ENCODE measurements at regions of chr22 and their contacts with region 1.

Region 1: GRCh38 chr22:30116362-30117117 is 36.3 kb downstream of the HORMAD2 start:
- DNase-seq: no peak
- ATAC-seq: no peak
- H3K4me3 Mint-ChIP-seq: no peak overlapping the region
- H3K27ac Mint-ChIP-seq: no peak overlapping the region
- H3K4me1 Mint-ChIP-seq: peaks cover 41% of the 10 kb centered on the region
- H3K27me3 Mint-ChIP-seq: no peaks in the 10 kb centered on the region

Region 2: GRCh38 chr22:30062950-30063349 is 53.6 kb before region 1 on chr22:
- CTCF ChIA-PET with region 1: no interaction called
- POLR2A ChIA-PET with region 1: no interaction called
- DNase-seq: no peak
- ATAC-seq: no peak
- H3K4me3 Mint-ChIP-seq: no peak overlapping the region
- H3K27ac Mint-ChIP-seq: no peak overlapping the region
- H3K4me1 Mint-ChIP-seq: no peaks in the 10 kb centered on the region
- H3K27me3 Mint-ChIP-seq: peaks cover 21% of the 10 kb centered on the region

Region 3: GRCh38 chr22:30178181-30179126 is 61.9 kb after region 1 on chr22:
- CTCF ChIA-PET with region 1: interaction called, 17 read pairs
- POLR2A ChIA-PET with region 1: no interaction called
- DNase-seq: peak; percentile 74
- ATAC-seq: peak; percentile 82
- H3K4me3 Mint-ChIP-seq: peak overlapping the region; percentile 35
- H3K27ac Mint-ChIP-seq: peak overlapping the region; percentile 93
- H3K4me1 Mint-ChIP-seq: peaks cover 88% of the 10 kb centered on the region
- H3K27me3 Mint-ChIP-seq: no peaks in the 10 kb centered on the region

Region 4: GRCh38 chr22:30253205-30253852 is 136.8 kb after region 1 on chr22:
- CTCF ChIA-PET with region 1: interaction called, 14 read pairs
- POLR2A ChIA-PET with region 1: interaction called, 3 read pairs
- DNase-seq: no peak
- ATAC-seq: no peak
- H3K4me3 Mint-ChIP-seq: peak overlapping the region; percentile 12
- H3K27ac Mint-ChIP-seq: peak overlapping the region; percentile 76
- H3K4me1 Mint-ChIP-seq: peaks cover 93% of the 10 kb centered on the region
- H3K27me3 Mint-ChIP-seq: no peaks in the 10 kb centered on the region

Measured in activated CD8-positive, alpha-beta T cell treated with anti-CD3 and anti-CD28 coated beads, Interleukin-2, amount 10 ng/mL, durations not matched to agents 7 days and 5 days (primary cell).